CD4-positive, alpha-beta T cell (primary cell): ENCODE measurements at regions of chr13 and their contacts with region 1.

Region 1: GRCh38 chr13:24995226-24995804 is 100.6 kb upstream of the PABPC3 start:
- DNase-seq: peak; percentile 11 to 80 (median 39)
- ATAC-seq: peak; percentile 66
- H3K4me3 ChIP-seq: no peak overlapping the region
- H3K4me3 Mint-ChIP-seq: no peak overlapping the region
- H3K27ac ChIP-seq: no peak overlapping the region
- H3K27ac Mint-ChIP-seq: no peak overlapping the region
- H3K4me1 ChIP-seq: no peaks in the 10 kb centered on the region
- H3K4me1 Mint-ChIP-seq: peaks cover 4% of the 10 kb centered on the region
- H3K27me3 ChIP-seq: peaks cover 3 to 16% of the 10 kb centered on the region in 2 experiments
- H3K27me3 Mint-ChIP-seq: peaks cover 45% of the 10 kb centered on the region
- CTCF ChIP-seq: peak; percentile 82

Region 2: GRCh38 chr13:24834902-24835510 is 160.3 kb before region 1 on chr13:
- CTCF ChIA-PET with region 1: no interaction called
- POLR2A ChIA-PET with region 1: no interaction called
- intact Hi-C with region 1: no loop called
- DNase-seq: peak in 1 of 14 experiments; percentile 3
- ATAC-seq: no peak
- H3K4me3 ChIP-seq: no peak overlapping the region
- H3K4me3 Mint-ChIP-seq: no peak overlapping the region
- H3K27ac ChIP-seq: no peak overlapping the region
- H3K27ac Mint-ChIP-seq: no peak overlapping the region
- H3K4me1 ChIP-seq: no peaks in the 10 kb centered on the region
- H3K4me1 Mint-ChIP-seq: no peaks in the 10 kb centered on the region
- H3K27me3 ChIP-seq: no peaks in the 10 kb centered on the region
- H3K27me3 Mint-ChIP-seq: peaks cover 34% of the 10 kb centered on the region
- CTCF ChIP-seq: no peak

Region 3: DNA sequence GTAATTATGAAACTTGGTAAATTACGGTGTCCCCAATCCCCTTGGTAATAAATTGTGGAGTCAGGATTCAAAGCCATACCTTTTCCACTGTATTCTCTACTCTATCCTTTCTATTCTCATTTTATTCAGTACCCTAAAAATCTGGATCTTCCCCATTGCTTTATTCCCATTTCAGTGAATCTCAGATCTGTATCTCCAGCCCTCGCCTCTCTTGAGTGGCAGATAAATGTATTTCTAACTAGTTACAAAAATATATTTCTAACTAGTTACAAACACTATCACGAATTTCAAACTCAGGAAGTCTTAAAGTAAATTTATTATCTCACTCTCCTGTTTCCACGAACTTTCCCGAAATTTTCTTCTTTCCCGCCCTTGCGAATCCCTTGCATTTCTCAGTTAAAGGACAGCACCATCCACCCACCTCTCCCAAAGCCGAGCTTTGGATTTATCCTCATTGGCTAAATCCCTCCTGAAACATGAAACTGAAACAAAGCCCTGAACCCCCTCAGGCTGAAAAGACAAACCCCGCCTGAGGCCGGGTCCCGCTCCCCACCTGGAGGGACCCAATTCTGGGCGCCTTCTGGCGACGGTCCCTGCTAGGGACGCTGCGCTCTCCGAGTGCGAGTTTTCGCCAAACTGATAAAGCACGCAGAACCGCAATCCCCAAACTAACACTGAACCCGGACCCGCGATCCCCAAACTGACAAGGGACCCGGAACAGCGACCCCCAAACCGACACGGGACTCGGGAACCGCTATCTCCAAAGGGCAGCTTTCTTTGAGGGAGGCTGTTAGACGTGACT is 63.7 kb before region 1 on chr13:
- CTCF ChIA-PET with region 1: no interaction called
- POLR2A ChIA-PET with region 1: no interaction called
- intact Hi-C with region 1: no loop called
- DNase-seq: no peak
- ATAC-seq: no peak
- H3K4me3 ChIP-seq: no peak overlapping the region
- H3K4me3 Mint-ChIP-seq: no peak overlapping the region
- H3K27ac ChIP-seq: no peak overlapping the region
- H3K27ac Mint-ChIP-seq: no peak overlapping the region
- H3K4me1 ChIP-seq: peaks cover 4% of the 10 kb centered on the region
- H3K4me1 Mint-ChIP-seq: no peaks in the 10 kb centered on the region
- H3K27me3 ChIP-seq: peaks cover 20 to 38% of the 10 kb centered on the region in 2 experiments
- H3K27me3 Mint-ChIP-seq: peaks cover 40% of the 10 kb centered on the region
- CTCF ChIP-seq: no peak

Region 4: DNA sequence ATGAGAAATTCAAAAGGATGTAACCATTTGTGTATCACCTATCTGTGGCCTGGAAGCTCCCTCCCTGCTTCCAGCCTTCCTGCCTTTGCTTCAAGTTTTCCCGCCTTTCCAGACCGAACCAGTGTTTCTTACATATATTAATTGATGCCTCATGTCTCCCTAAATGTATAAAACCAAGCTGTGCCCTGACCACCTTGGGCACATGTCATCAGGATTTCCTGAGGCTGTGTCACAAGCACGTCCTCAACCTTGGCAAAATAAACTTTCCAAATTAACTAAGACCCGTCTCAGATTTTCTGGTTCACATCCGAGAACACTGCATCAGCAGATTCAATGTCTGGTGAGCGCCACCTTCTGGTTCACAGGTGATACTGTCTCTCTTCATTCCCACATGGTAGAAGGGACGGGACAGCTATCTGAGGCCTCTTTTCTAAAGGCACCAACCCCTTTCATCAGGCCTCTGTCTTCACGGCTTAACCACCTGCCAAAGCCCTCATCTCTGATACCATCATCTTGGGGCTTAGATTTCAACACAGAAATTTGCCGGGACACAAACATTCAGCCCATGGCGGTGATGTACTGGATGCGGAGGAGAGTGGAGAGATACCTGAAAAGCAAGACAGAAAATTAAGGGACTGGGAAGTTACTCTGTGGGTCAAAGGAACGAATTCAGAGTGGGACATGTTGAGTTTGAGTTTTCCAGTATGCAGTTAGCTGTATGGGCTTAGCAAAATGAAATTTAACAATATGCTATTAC is 41.9 kb after region 1 on chr13:
- CTCF ChIA-PET with region 1: interaction called, 4 read pairs
- POLR2A ChIA-PET with region 1: no interaction called
- intact Hi-C with region 1: loop called in 1 of 2 experiments (anchors 1 kb)
- DNase-seq: peak in 10 of 14 experiments; percentile 2 to 72 (median 23)
- ATAC-seq: peak; percentile 44
- H3K4me3 ChIP-seq: no peak overlapping the region
- H3K4me3 Mint-ChIP-seq: no peak overlapping the region
- H3K27ac ChIP-seq: no peak overlapping the region
- H3K27ac Mint-ChIP-seq: no peak overlapping the region
- H3K4me1 ChIP-seq: no peaks in the 10 kb centered on the region
- H3K4me1 Mint-ChIP-seq: no peaks in the 10 kb centered on the region
- H3K27me3 ChIP-seq: peaks cover 2 to 12% of the 10 kb centered on the region in 2 experiments
- H3K27me3 Mint-ChIP-seq: peaks cover 56% of the 10 kb centered on the region
- CTCF ChIP-seq: peak; percentile 66

Region 5: GRCh38 chr13:25114220-25114619 is 118.9 kb after region 1 on chr13:
- CTCF ChIA-PET with region 1: interaction called, 3 read pairs
- POLR2A ChIA-PET with region 1: no interaction called
- intact Hi-C with region 1: loop called (anchors 1 to 10 kb)
- DNase-seq: peak in 13 of 14 experiments; percentile 10 to 61 (median 39)
- ATAC-seq: peak; percentile 69
- H3K4me3 ChIP-seq: no peak overlapping the region
- H3K4me3 Mint-ChIP-seq: no peak overlapping the region
- H3K27ac ChIP-seq: no peak overlapping the region
- H3K27ac Mint-ChIP-seq: no peak overlapping the region
- H3K4me1 ChIP-seq: peaks cover 3% of the 10 kb centered on the region
- H3K4me1 Mint-ChIP-seq: no peaks in the 10 kb centered on the region
- H3K27me3 ChIP-seq: peaks cover 3 to 7% of the 10 kb centered on the region in 2 experiments
- H3K27me3 Mint-ChIP-seq: peaks cover 49% of the 10 kb centered on the region
- CTCF ChIP-seq: peak; percentile 69

Region 6: GRCh38 chr13:25375727-25376358 is 380.5 kb after region 1 on chr13:
- CTCF ChIA-PET with region 1: interaction called, 3 read pairs
- POLR2A ChIA-PET with region 1: no interaction called
- intact Hi-C with region 1: loop called in 1 of 2 experiments (anchors 5 kb)
- DNase-seq: peak in 10 of 14 experiments; percentile 1 to 65 (median 16)
- ATAC-seq: peak; percentile 48
- H3K4me3 ChIP-seq: no peak overlapping the region
- H3K4me3 Mint-ChIP-seq: no peak overlapping the region
- H3K27ac ChIP-seq: no peak overlapping the region
- H3K27ac Mint-ChIP-seq: no peak overlapping the region
- H3K4me1 ChIP-seq: peaks cover 6% of the 10 kb centered on the region
- H3K4me1 Mint-ChIP-seq: peaks cover 7% of the 10 kb centered on the region
- H3K27me3 ChIP-seq: peaks cover 37 to 38% of the 10 kb centered on the region in 2 experiments
- H3K27me3 Mint-ChIP-seq: peaks cover 58% of the 10 kb centered on the region
- CTCF ChIP-seq: peak; percentile 74